Naive thymus-derived CD8-positive, alpha-beta T cell (primary cell): ENCODE measurements at regions of chr9 and their contacts with region 1.

Region 1: DNA sequence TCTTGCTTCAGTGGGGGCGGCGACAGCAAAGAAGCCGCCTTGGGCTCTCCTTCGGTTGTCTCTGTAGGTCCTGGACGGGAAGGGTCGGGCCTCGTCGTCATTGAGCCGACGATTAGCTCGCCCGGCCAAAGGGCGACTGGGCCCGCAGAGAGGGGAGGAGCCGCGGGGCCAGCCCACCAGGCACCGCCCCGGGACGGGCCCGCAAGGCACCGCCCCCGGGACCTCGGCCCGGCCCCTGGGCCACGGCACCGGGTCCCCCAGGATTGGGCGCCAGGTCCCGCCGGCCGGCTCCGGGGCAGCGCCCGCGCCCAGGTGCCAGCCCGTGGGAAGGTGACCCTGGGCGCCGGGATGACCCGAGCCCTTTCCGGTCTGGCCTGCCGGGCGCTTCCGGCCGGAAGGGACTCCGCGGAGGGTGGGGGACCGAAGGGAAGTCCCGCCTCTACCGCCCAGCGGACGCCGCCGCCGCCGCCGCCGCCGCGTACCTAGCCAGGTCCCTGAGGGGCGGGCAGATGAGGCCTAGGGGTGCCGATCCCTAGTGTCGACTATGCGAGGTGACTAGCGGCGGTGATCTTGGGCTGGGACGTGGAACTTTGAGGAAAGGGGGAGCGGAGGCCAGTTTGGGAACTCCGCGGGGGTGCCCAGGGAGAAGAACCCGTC is at the starts of genes GBA2 and RGP1:
- DNase-seq: peak; percentile 24 to 74 (median 56)
- ATAC-seq: peak; percentile 79 to 84
- H3K4me3 Mint-ChIP-seq: peak within 1 kb of the TSS; percentile 90 to 99 (median 96)
- H3K27ac Mint-ChIP-seq: peak within 1 kb of the TSS; percentile 90 to 97 (median 96)
- H3K4me1 Mint-ChIP-seq: peaks cover 36 to 55% (median 49%) of the 10 kb centered on the region in 4 donors
- H3K27me3 Mint-ChIP-seq: no peaks in the 10 kb centered on the region
- polyA plus RNA-seq, gene GBA2: 14.8 to 28.3 (median 22.0) TPM
- polyA plus RNA-seq, gene RGP1: 6.8 to 9.6 (median 8.1) TPM

Region 2: GRCh38 chr9:35738924-35739323 is 10.1 kb before region 1 on chr9:
- POLR2A ChIA-PET with region 1: interaction called, 68 read pairs
- DNase-seq: peak in 1 of 10 donors; percentile 14
- ATAC-seq: no peak
- H3K4me3 Mint-ChIP-seq: no peak overlapping the region
- H3K27ac Mint-ChIP-seq: peak overlapping the region in 1 of 10 donors; percentile 40
- H3K4me1 Mint-ChIP-seq: peaks cover 16 to 32% (median 28%) of the 10 kb centered on the region in 4 donors
- H3K27me3 Mint-ChIP-seq: no peaks in the 10 kb centered on the region

Region 3: DNA sequence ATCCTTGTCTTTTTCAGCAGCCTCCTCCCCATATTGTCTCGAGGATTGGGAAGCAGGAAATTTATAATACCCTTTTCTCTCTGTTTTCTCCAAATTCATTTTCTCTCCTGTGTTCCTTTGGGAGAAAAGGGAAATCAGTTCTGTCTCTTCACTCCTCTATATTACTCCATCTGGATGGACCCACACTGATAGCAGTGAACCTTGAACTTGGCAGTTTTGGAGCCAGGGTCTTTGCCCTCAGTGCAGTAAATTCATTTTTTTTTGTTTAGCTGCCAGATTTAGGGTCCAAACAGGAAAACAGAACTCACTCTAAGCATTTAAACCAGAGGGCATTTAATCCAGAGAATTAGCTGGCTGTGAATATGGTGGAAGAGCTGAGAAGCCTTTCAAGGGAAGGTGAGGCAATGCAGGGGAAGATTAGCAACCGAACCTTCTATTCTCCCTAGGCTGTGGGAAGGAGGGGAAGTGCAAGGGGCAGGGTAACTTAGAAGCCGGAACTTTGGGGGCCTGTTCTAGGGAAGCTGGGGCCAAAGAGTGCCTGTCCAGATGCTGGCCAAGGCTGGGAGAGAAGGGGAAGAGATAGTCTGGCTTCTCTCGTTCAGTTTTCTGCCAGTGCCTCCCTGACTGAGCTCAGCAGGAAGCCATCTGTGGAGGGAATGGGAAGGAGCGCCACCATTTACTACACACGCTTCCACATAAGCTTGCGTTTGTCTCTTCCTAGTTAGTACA is 26.1 kb after region 1 on chr9:
- POLR2A ChIA-PET with region 1: no interaction called
- DNase-seq: no peak
- ATAC-seq: no peak
- H3K4me3 Mint-ChIP-seq: no peak overlapping the region
- H3K27ac Mint-ChIP-seq: peak overlapping the region in 6 of 10 donors; percentile 8 to 78 (median 46)
- H3K4me1 Mint-ChIP-seq: peaks cover 0 to 15% (median 4%) of the 10 kb centered on the region in 4 donors
- H3K27me3 Mint-ChIP-seq: no peaks in the 10 kb centered on the region

Region 4: GRCh38 chr9:35814841-35815543 is 66.0 kb after region 1 on chr9 and contains the start of gene HINT2:
- POLR2A ChIA-PET with region 1: interaction called, 10 read pairs
- DNase-seq: peak; percentile 92 to 98 (median 96)
- ATAC-seq: peak; percentile 76 to 78
- H3K4me3 Mint-ChIP-seq: peak within 1 kb of the TSS; percentile 87 to 99 (median 96)
- H3K27ac Mint-ChIP-seq: peak within 1 kb of the TSS; percentile 91 to 98 (median 96)
- H3K4me1 Mint-ChIP-seq: peaks cover 31 to 46% (median 40%) of the 10 kb centered on the region in 4 donors
- H3K27me3 Mint-ChIP-seq: peaks cover 0 to 5% (median 0%) of the 10 kb centered on the region in 5 donors
- polyA plus RNA-seq, gene HINT2: 73.0 to 87.9 (median 78.5) TPM